SK-N-SH (cell line): ENCODE measurements at regions of chr12 and their contacts with region 1.

Region 1: DNA sequence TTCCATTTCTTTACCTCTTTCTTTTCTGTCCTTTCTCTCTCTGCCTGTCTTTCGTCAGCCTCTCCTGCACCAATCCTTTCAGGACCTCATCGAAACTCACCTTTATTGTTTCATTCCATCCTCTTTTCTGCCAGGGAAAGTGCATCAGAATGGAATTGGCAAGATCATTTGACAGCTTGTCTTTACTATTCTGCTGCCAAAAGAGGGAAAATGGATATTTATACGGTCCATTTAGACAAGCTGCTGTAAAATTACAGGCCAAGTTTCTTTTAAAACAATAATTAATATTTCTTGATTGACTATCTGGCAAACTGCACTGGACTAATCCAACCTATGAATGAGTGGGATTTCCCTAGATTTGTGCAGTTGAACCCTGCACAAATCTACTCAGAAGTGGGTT is 7.6 kb upstream of the SRGAP1 start:
- DNase-seq: no peak
- H3K4me3 ChIP-seq: no peak overlapping the region
- H3K27ac ChIP-seq: no peak overlapping the region
- H3K4me1 ChIP-seq: peaks cover 0 to 2% of the 10 kb centered on the region in 2 experiments; a peak in 1 of 4 replicates
- H3K27me3 ChIP-seq: no peaks in the 10 kb centered on the region
- CTCF ChIP-seq: no peak
- EP300 ChIP-seq: no peak
- RAD21 ChIP-seq: no peak

Region 2: GRCh38 chr12:64181504-64182291 is 344.8 kb after region 1 on chr12:
- CTCF ChIA-PET with region 1: interaction called, 11 read pairs
- POLR2A ChIA-PET with region 1: no interaction called
- DNase-seq: peak; percentile 50
- H3K4me3 ChIP-seq: peak overlapping the region in 1 of 2 experiments; percentile 42; a peak in 3 of 4 replicates
- H3K27ac ChIP-seq: peak overlapping the region; percentile 78 to 98; a peak in 3 of 4 replicates
- H3K4me1 ChIP-seq: peaks cover 5 to 30% of the 10 kb centered on the region in 2 experiments
- H3K27me3 ChIP-seq: no peaks in the 10 kb centered on the region
- CTCF ChIP-seq: peak; percentile 70
- EP300 ChIP-seq: peak in 1 of 2 experiments; percentile 92; a peak in 2 of 4 replicates
- RAD21 ChIP-seq: peak; percentile 93